ENCODE measurements at regions of chr1 and their contacts with region 1.

Region 1: GRCh38 chr1:86156566-86157455 is at the start of gene COL24A1:
- DNase-seq: peak; percentile 39
- ATAC-seq: peak; percentile 42
- H3K4me3 Mint-ChIP-seq: peak within 1 kb of the TSS; percentile 15
- H3K27ac Mint-ChIP-seq: no peak within 1 kb of the TSS
- H3K4me1 Mint-ChIP-seq: peaks cover 10% of the 10 kb centered on the region
- H3K27me3 Mint-ChIP-seq: peaks cover 43% of the 10 kb centered on the region
- total RNA-seq, gene COL24A1: not detected

Region 2: DNA sequence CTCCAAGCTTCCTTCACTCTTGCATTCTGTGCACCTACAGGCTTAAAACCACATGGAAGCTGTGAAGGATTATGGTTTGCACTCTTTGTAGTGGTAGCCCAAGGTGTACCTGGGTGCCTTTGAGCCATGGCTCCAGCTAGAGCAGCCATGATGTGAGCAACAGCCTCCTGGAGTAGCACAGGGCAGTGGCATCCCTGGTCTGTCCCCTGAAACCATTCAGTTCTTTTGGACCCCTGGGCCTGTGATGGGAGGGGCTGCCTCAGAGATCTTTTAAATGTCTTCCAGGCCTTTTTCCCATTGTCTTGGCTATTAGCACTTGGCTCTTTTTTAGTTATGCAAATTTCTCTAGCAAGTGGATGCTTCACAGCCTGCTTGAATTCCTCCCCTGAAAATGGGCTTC is 437.5 kb after region 1 on chr1:
- CTCF ChIA-PET with region 1: no interaction called
- POLR2A ChIA-PET with region 1: no interaction called
- intact Hi-C with region 1: loop called in 1 of 2 experiments (anchors 5 kb)
- DNase-seq: no peak
- ATAC-seq: no peak
- H3K4me3 Mint-ChIP-seq: no peak overlapping the region
- H3K27ac Mint-ChIP-seq: no peak overlapping the region
- H3K4me1 Mint-ChIP-seq: no peaks in the 10 kb centered on the region
- H3K27me3 Mint-ChIP-seq: peaks cover 7% of the 10 kb centered on the region